Vagina (tissue), 2 donors: ENCODE measurements at regions of chr4 and their contacts with region 1.

Region 1: GRCh38 chr4:165464813-165465381 is 86.1 kb downstream of the CPE start:
- DNase-seq: no peak
- H3K4me3 ChIP-seq: no peak overlapping the region
- H3K27ac ChIP-seq: no peak overlapping the region
- H3K4me1 ChIP-seq: no peaks in the 10 kb centered on the region
- H3K27me3 ChIP-seq: no peaks in the 10 kb centered on the region
- CTCF ChIP-seq: peak; percentile 54 to 74 (median 59)
- POLR2A ChIP-seq: no peak

Region 2: GRCh38 chr4:165131247-165131832 is 333.6 kb before region 1 on chr4:
- intact Hi-C with region 1: loop called (anchors 5 kb)
- DNase-seq: no peak
- H3K4me3 ChIP-seq: no peak overlapping the region
- H3K27ac ChIP-seq: no peak overlapping the region
- H3K4me1 ChIP-seq: no peaks in the 10 kb centered on the region
- H3K27me3 ChIP-seq: no peaks in the 10 kb centered on the region
- CTCF ChIP-seq: peak; percentile 58 to 84 (median 78)
- POLR2A ChIP-seq: no peak

Region 3: DNA sequence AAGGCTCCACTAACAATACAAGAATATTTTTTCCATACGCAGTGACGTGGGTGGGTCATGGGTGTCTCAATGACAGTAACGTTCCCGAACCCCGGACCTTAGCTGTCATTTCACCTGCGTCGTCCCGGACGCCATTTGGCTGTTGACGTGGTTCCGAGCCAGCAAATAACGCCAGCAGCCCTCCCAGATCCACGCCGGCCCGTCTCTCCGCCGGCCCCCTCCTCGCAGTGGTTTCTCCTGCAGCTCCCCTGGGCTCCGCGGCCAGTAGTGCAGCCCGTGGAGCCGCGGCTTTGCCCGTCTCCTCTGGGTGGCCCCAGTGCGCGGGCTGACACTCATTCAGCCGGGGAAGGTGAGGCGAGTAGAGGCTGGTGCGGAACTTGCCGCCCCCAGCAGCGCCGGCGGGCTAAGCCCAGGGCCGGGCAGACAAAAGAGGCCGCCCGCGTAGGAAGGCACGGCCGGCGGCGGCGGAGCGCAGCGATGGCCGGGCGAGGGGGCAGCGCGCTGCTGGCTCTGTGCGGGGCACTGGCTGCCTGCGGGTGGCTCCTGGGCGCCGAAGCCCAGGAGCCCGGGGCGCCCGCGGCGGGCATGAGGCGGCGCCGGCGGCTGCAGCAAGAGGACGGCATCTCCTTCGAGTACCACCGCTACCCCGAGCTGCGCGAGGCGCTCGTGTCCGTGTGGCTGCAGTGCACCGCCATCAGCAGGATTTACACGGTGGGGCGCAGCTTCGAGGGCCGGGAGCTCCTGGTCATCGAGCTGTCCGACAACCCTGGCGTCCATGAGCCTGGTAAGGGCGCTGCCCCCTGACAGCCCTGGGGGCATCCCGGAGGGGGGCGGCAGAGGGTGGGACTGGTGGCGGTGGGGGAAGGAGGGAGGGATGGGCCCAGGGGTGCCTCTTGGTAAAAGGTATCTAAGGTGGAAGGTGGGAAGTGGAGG is 85.9 kb before region 1 on chr4 and contains the start of gene CPE:
- intact Hi-C with region 1: loop called (anchors 10 kb)
- DNase-seq: no peak
- H3K4me3 ChIP-seq: peak within 1 kb of the TSS; percentile 53 to 56
- H3K27ac ChIP-seq: peak within 1 kb of the TSS; percentile 73
- H3K4me1 ChIP-seq: peaks cover 4% of the 10 kb centered on the region
- H3K27me3 ChIP-seq: no peaks in the 10 kb centered on the region
- CTCF ChIP-seq: peak in 1 of 3 experiments; percentile 66
- POLR2A ChIP-seq: no peak
- total RNA-seq, gene CPE: 103 TPM

Region 4: DNA sequence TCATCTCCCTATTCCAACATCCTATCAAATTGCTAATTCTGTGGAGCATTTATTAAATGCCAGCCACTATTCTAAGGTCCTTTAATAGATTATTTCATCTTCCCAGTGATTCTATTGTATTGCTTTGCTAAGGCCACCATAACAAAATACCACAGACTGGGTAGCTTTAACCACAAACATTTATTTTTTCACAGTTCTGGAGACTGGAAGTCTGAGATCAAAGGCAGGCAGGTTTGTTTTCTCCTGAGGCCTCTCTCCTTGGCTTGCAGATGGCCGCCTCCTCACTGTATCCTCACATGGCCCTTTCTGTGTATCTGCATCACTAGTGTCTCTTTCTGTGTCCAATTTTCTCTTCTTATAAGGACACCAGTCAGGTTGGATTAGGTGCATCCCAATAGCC is 21.6 kb before region 1 on chr4:
- intact Hi-C with region 1: no loop called
- DNase-seq: no peak
- H3K4me3 ChIP-seq: no peak overlapping the region
- H3K27ac ChIP-seq: no peak overlapping the region
- H3K4me1 ChIP-seq: peaks cover 11% of the 10 kb centered on the region
- H3K27me3 ChIP-seq: no peaks in the 10 kb centered on the region
- CTCF ChIP-seq: no peak
- POLR2A ChIP-seq: no peak